H1 (cell line): ENCODE measurements at regions of chr11 and their contacts with region 1.

Region 1: GRCh38 chr11:93197380-93198214 is at the start of gene SLC36A4:
- DNase-seq: peak; percentile 79 to 95
- H3K4me3 ChIP-seq: peak within 1 kb of the TSS; percentile 67 to 99 (median 77)
- H3K27ac ChIP-seq: peak within 1 kb of the TSS; percentile 93
- H3K4me1 ChIP-seq: peaks cover 0 to 3% (median 1%) of the 10 kb centered on the region in 4 experiments; a peak in 2 of 7 replicates
- H3K27me3 ChIP-seq: no peaks in the 10 kb centered on the region
- CTCF ChIP-seq: no peak
- EP300 ChIP-seq: no peak
- POLR2A ChIP-seq: peak; percentile 91 to 92
- RAD21 ChIP-seq: no peak; a peak in 1 of 4 replicates
- total RNA-seq, gene SLC36A4: 22.7 and 24.4 TPM in 2 replicates

Region 2: DNA sequence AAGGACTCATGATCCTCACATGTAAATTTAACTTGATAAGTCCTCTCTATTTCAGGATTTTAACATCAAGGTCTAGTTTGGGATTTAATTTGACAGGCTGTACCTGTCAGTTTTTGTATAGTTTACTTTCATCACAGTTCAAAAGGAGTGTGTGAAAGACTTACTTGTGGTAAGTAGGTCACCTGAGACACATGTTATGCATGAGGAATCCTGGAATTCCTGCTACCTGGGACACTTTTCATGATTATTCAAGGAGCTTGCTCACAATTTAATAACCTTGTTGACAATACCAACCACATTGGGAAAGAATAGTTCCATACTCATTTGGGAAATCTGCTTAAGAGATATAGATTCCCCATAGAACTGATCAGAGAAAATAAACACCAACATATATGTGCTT is 16.0 kb after region 1 on chr11:
- CTCF ChIA-PET with region 1: interaction called, 4 read pairs
- POLR2A ChIA-PET with region 1: interaction called, 21 read pairs
- DNase-seq: no peak
- H3K4me3 ChIP-seq: no peak overlapping the region
- H3K27ac ChIP-seq: no peak overlapping the region
- H3K4me1 ChIP-seq: 0 out of 7 replicates have a peak, but pooled peaks cover 0 to 3% (median 0%) of the 10 kb centered on the region in 4 experiments
- H3K27me3 ChIP-seq: no peaks in the 10 kb centered on the region
- CTCF ChIP-seq: no peak
- EP300 ChIP-seq: no peak
- POLR2A ChIP-seq: no peak
- RAD21 ChIP-seq: no peak

Region 3: DNA sequence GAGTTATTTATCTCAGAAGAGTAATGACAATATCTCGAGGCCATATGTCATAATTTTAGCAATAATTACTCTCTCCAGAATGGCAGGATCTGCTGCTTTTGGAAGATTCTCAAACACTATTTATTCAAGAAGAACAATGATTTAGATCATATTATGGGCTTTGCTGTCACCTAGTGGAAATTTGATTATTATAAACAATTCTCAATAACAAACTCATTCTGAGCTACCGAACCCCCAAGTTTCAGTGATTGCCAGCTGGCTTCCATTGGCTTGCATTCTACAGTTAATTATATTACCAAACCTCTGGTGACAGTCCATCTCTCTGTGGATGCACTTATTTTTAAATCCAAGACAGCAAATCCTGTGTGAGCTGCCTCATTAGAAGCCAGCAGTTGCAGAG is 28.1 kb after region 1 on chr11:
- CTCF ChIA-PET with region 1: interaction called, 11 read pairs
- POLR2A ChIA-PET with region 1: no interaction called
- DNase-seq: no peak
- H3K4me3 ChIP-seq: no peak overlapping the region
- H3K27ac ChIP-seq: no peak overlapping the region
- H3K4me1 ChIP-seq: no peaks in the 10 kb centered on the region
- H3K27me3 ChIP-seq: no peaks in the 10 kb centered on the region
- CTCF ChIP-seq: no peak; a peak in 1 of 4 replicates
- EP300 ChIP-seq: no peak
- POLR2A ChIP-seq: no peak
- RAD21 ChIP-seq: peak; percentile 40 to 42